HCT116 (cell line): ENCODE measurements at regions of chr17 and their contacts with region 1.

Region 1: GRCh38 chr17:76557368-76558197 is 17.7 kb downstream of the PRCD start:
- DNase-seq: peak; percentile 98
- ATAC-seq: peak; percentile 90
- H3K4me3 ChIP-seq: peak overlapping the region; percentile 94 to 96
- H3K27ac ChIP-seq: peak overlapping the region; percentile 87
- H3K4me1 ChIP-seq: peaks cover 12 to 41% of the 10 kb centered on the region in 2 experiments; a peak in 3 of 4 replicates
- H3K27me3 ChIP-seq: no peaks in the 10 kb centered on the region
- CTCF ChIP-seq: peak in 2 of 3 experiments; percentile 68; a peak in 4 of 6 replicates
- POLR2A ChIP-seq: peak; percentile 97
- RAD21 ChIP-seq: no peak

Region 2: GRCh38 chr17:76540381-76541300 is 16.9 kb before region 1 on chr17:
- CTCF ChIA-PET with region 1: interaction called, 14 read pairs
- POLR2A ChIA-PET with region 1: interaction called, 8 read pairs
- RAD21 ChIA-PET with region 1: no interaction called
- intact Hi-C with region 1: no loop called
- DNase-seq: peak; percentile 93
- ATAC-seq: peak; percentile 99
- H3K4me3 ChIP-seq: peak overlapping the region; percentile 51 to 57
- H3K27ac ChIP-seq: peak overlapping the region; percentile 61
- H3K4me1 ChIP-seq: peaks cover 8 to 16% of the 10 kb centered on the region in 2 experiments
- H3K27me3 ChIP-seq: no peaks in the 10 kb centered on the region
- CTCF ChIP-seq: peak in 2 of 3 experiments; percentile 29 to 32; a peak in 3 of 6 replicates
- POLR2A ChIP-seq: peak; percentile 34
- RAD21 ChIP-seq: no peak

Region 3: GRCh38 chr17:76567634-76568432 is 10.2 kb after region 1 on chr17:
- CTCF ChIA-PET with region 1: interaction called, 11 read pairs
- POLR2A ChIA-PET with region 1: interaction called, 26 read pairs
- RAD21 ChIA-PET with region 1: no interaction called
- intact Hi-C with region 1: no loop called
- DNase-seq: no peak
- ATAC-seq: peak; percentile 18
- H3K4me3 ChIP-seq: no peak overlapping the region
- H3K27ac ChIP-seq: no peak overlapping the region; the same call in 1 of the 2 replicates
- H3K4me1 ChIP-seq: peaks cover 0 to 25% of the 10 kb centered on the region in 2 experiments; a peak in 1 of 4 replicates
- H3K27me3 ChIP-seq: no peaks in the 10 kb centered on the region
- CTCF ChIP-seq: no peak
- POLR2A ChIP-seq: no peak
- RAD21 ChIP-seq: no peak

Region 4: DNA sequence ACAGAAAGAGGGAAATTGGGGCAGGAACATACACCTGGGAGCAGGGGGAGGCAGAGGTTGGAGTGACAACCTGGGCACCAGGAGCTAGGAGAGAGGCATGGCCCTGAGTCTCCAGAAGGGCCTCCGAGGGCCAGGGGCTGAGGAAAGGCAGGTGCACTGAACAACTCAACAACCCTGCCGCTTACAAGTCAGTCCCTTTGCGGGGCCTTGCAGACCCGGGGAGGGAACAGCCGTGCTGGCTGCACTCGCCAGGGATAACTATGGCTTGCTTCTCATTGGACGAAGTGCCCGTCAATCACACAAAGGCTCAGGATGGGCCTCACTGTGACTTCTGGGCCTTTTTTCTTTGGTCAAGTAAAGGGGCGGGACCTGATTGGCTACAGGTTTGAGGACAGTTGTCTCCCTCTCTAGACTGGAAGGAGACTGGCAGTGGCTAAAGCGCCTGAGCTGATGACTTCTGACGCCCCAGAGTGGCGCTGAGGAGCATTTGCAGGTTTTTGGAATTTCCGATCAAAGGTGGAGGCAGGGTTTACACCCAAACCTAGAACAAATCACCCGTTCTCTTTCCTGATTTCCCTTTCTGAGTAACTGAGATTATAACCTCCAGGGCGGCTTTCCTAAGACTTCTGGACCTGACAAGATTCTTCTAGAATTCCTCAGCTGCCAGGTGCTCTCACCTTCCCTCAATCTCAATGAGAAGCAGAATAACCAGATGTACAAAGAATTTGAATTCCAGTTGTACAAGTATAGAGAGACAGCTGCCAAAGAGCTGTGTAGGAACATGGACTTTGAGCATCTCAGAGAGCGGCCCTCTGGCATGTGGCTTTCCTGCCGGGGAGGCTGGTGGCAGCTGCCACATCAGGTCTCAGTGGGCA is 55.6 kb after region 1 on chr17:
- CTCF ChIA-PET with region 1: interaction called, 21 read pairs
- POLR2A ChIA-PET with region 1: interaction called, 23 read pairs
- RAD21 ChIA-PET with region 1: interaction called in 1 of 2 experiments, 3 read pairs
- intact Hi-C with region 1: no loop called
- DNase-seq: peak; percentile 99
- ATAC-seq: peak; percentile 99
- H3K4me3 ChIP-seq: peak overlapping the region in 1 of 2 experiments; percentile 9; a peak in 1 of 4 replicates
- H3K27ac ChIP-seq: peak overlapping the region; percentile 43
- H3K4me1 ChIP-seq: peaks cover 16 to 29% of the 10 kb centered on the region in 2 experiments; a peak in 3 of 4 replicates
- H3K27me3 ChIP-seq: no peaks in the 10 kb centered on the region
- CTCF ChIP-seq: peak; percentile 62 to 99 (median 72)
- POLR2A ChIP-seq: no peak
- RAD21 ChIP-seq: peak; percentile 96

Region 5: DNA sequence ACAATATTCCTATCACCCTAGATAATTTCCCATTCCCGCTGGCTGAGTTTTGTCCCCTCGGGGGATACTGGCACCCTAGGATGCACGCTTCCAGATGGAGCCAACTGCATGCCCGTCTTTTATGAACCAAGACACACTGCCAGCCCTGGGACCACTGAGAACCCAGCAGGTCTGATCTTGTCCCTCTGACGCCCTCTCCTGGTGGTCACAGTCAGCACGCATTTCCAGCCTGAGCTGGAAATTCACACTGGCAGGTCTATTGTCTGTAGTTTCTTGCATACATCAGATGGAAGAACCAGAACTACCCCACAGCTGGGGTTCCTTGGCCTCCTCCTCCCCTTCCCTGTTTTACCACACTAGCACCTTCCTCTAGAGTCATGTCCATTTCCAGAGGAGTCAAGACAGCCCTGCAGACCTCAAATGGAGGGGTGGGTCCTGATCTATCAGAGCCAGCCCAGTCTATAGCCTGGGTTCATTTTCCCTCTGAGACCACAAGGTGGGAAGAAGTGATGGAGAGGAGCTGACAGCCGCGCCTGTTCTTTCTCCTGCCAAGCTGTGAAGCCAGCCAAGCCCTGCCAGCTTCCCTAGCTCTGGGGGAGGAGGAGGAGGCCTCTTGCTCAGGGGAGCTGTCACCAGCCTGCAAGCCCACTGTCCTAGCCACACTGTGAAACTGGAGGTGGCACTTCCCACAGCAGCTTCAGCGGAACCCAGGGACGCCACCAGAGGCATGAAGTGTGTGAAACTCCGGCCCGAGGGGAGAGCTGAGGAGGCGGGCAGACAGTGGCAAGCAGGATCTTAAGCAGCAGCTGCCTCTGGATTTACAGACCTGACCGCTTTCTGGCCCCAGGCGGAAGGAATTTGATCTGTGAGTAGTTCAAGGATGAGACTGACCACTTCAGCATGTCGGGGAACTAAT is 123.9 kb after region 1 on chr17:
- CTCF ChIA-PET with region 1: interaction called, 8 read pairs
- POLR2A ChIA-PET with region 1: interaction called, 7 read pairs
- RAD21 ChIA-PET with region 1: interaction called in 1 of 2 experiments, 5 read pairs
- intact Hi-C with region 1: loop called (anchors 1 kb)
- DNase-seq: peak; percentile 56
- ATAC-seq: peak; percentile 89
- H3K4me3 ChIP-seq: no peak overlapping the region
- H3K27ac ChIP-seq: no peak overlapping the region
- H3K4me1 ChIP-seq: no peaks in the 10 kb centered on the region
- H3K27me3 ChIP-seq: no peaks in the 10 kb centered on the region
- CTCF ChIP-seq: peak; percentile 90 to 99 (median 96)
- POLR2A ChIP-seq: no peak
- RAD21 ChIP-seq: peak; percentile 91

Region 6: DNA sequence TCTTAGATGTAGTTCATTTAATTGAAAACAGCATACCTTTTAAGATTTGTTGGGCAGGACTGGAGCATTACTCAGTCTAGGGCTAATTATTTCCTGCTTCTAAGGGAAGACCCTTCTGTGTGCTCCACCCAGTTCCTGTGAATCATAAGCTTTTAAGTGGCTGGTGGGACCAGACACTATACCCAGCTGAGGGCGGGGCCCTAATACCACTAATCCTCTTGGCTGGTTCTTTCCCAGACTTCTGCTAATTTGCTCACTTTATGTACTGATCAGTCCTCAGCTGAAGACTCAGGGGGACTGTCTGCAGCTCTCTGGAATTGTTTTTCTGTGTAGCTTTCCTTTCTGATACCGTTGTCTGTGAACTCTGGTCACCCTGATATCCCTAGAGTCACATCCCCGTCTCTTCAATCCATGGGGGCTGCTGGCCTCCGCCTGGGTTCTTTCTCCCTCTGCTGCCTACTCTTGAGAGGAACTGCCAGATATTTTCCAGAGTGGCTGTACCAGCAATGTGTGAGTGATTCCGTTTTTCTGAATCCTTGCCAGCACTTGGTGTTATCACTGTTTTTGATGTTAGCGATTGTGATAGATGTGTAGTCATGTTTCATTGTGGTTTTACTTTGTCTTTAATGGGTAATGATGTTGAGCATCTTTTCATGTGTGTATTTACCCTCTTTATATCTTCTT is 215.4 kb after region 1 on chr17:
- CTCF ChIA-PET with region 1: no interaction called
- POLR2A ChIA-PET with region 1: no interaction called
- RAD21 ChIA-PET with region 1: no interaction called
- intact Hi-C with region 1: no loop called
- DNase-seq: peak; percentile 89
- ATAC-seq: peak; percentile 98
- H3K4me3 ChIP-seq: peak overlapping the region; percentile 35 to 55
- H3K27ac ChIP-seq: peak overlapping the region; percentile 83
- H3K4me1 ChIP-seq: peaks cover 24 to 32% of the 10 kb centered on the region in 2 experiments
- H3K27me3 ChIP-seq: no peaks in the 10 kb centered on the region
- CTCF ChIP-seq: 0 out of 6 replicates have a peak, but pooled peaks of 1 of the 3 experiments have one; percentile 12
- POLR2A ChIP-seq: no peak
- RAD21 ChIP-seq: peak; percentile 44

Region 7: GRCh38 chr17:77247048-77247541 is 689.5 kb after region 1 on chr17:
- CTCF ChIA-PET with region 1: no interaction called
- POLR2A ChIA-PET with region 1: no interaction called
- RAD21 ChIA-PET with region 1: no interaction called
- intact Hi-C with region 1: no loop called
- DNase-seq: peak; percentile 60
- ATAC-seq: peak; percentile 96
- H3K4me3 ChIP-seq: peak overlapping the region; percentile 38 to 53
- H3K27ac ChIP-seq: no peak overlapping the region; the same call in 1 of the 2 replicates
- H3K4me1 ChIP-seq: peaks cover 0 to 16% of the 10 kb centered on the region in 2 experiments; a peak in 1 of 4 replicates
- H3K27me3 ChIP-seq: no peaks in the 10 kb centered on the region
- CTCF ChIP-seq: peak; percentile 90 to 97 (median 91)
- POLR2A ChIP-seq: no peak
- RAD21 ChIP-seq: peak; percentile 96